Activated CD8-positive, alpha-beta memory T cell treated with anti-CD3 and anti-CD28 coated beads, Interleukin-2, amount 10 ng/mL, durations not matched to agents 7 days and 5 days (primary cell): ENCODE measurements at regions of chr21 and their contacts with region 1.

Region 1: GRCh38 chr21:36630485-36631206 is 68.3 kb upstream of the SIM2 start:
- DNase-seq: peak; percentile 62
- ATAC-seq: peak; percentile 49
- H3K4me3 Mint-ChIP-seq: no peak overlapping the region
- H3K27ac Mint-ChIP-seq: no peak overlapping the region
- H3K4me1 Mint-ChIP-seq: no peaks in the 10 kb centered on the region
- H3K27me3 Mint-ChIP-seq: peaks cover 6% of the 10 kb centered on the region

Region 2: GRCh38 chr21:36429947-36430546 is 200.6 kb before region 1 on chr21:
- CTCF ChIA-PET with region 1: no interaction called
- DNase-seq: peak; percentile 91
- ATAC-seq: peak; percentile 96
- H3K4me3 Mint-ChIP-seq: peak overlapping the region; percentile 64
- H3K27ac Mint-ChIP-seq: peak overlapping the region; percentile 81
- H3K4me1 Mint-ChIP-seq: peaks cover 25% of the 10 kb centered on the region
- H3K27me3 Mint-ChIP-seq: peaks cover 8% of the 10 kb centered on the region

Region 3: DNA sequence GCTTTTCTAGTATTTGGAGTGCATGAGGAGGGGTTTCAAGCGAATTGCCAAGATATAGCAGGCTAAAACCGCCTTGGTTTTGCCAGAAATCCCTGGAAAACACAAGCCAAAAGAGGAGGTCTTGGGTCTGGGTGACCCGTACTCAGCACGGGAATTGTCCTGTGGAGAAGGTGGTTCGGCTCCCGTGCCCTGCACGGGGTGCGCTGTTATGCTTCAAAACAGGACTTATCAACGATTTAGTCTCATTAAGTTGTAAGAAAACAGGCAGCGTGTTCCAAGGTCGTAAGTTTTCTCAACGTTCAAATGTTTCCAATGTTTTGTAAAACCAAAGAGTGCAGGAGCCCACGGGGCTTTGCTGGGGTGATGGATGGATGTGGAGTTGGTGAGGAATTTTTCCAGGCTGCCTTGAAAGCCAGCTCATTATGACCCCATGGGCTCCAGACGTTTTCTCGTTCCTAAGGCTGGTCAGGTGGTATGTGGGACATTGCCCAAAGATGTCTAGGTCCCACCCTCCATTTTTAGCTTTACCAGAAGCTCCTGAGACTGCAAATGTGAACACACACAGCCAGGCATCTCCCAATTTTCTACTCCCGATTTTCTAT is 75.3 kb before region 1 on chr21:
- CTCF ChIA-PET with region 1: no interaction called
- DNase-seq: peak; percentile 16
- ATAC-seq: no peak
- H3K4me3 Mint-ChIP-seq: no peak overlapping the region
- H3K27ac Mint-ChIP-seq: no peak overlapping the region
- H3K4me1 Mint-ChIP-seq: no peaks in the 10 kb centered on the region
- H3K27me3 Mint-ChIP-seq: peaks cover 18% of the 10 kb centered on the region

Region 4: DNA sequence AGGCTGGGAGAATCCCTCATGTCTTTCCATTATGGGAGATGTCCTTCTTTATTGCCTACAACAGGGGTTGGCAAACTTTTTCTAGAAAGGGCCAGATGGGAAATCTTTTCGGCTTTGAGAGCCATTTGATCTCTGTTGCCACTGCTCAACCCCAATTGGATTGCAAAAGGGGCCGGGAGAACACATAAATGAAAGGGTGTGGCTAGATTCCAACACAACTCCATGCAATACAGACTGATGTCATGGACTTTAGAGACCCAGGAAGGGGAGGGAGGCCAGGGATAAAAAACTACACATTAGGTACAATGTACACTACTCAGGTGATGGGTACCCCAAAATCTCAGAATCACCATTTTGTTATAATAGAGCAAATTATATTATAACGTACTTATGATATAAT is 29.3 kb before region 1 on chr21:
- CTCF ChIA-PET with region 1: interaction called, 11 read pairs
- DNase-seq: no peak
- ATAC-seq: no peak
- H3K4me3 Mint-ChIP-seq: no peak overlapping the region
- H3K27ac Mint-ChIP-seq: no peak overlapping the region
- H3K4me1 Mint-ChIP-seq: no peaks in the 10 kb centered on the region
- H3K27me3 Mint-ChIP-seq: peaks cover 20% of the 10 kb centered on the region

Region 5: DNA sequence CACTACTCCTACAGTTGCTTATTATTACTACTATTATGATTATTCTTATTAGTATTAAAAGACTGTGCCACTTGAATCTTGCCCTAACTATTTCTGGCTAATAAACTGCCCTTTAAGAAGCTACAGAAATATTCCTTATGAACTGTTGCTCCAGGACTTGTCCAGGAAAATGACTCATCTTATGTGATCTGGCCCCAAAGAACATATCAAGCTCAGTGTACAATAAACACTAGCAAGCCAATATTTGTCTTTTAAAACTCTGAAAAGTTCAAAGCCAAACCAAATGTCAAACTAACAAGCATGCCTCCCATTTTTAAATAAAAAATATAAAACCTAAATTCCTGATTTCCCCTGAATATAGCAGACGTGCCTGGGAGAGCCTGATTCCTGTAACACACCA is 20.4 kb before region 1 on chr21:
- CTCF ChIA-PET with region 1: interaction called, 11 read pairs
- DNase-seq: no peak
- ATAC-seq: no peak
- H3K4me3 Mint-ChIP-seq: no peak overlapping the region
- H3K27ac Mint-ChIP-seq: no peak overlapping the region
- H3K4me1 Mint-ChIP-seq: no peaks in the 10 kb centered on the region
- H3K27me3 Mint-ChIP-seq: peaks cover 10% of the 10 kb centered on the region

Region 6: GRCh38 chr21:36698981-36699891 is 68.6 kb after region 1 on chr21 and contains the start of gene SIM2:
- CTCF ChIA-PET with region 1: no interaction called
- DNase-seq: no peak
- ATAC-seq: no peak
- H3K4me3 Mint-ChIP-seq: peak within 1 kb of the TSS; percentile 35
- H3K27ac Mint-ChIP-seq: peak within 1 kb of the TSS; percentile 67
- H3K4me1 Mint-ChIP-seq: peaks cover 7% of the 10 kb centered on the region
- H3K27me3 Mint-ChIP-seq: peaks cover 85% of the 10 kb centered on the region
- total RNA-seq, gene SIM2: 0.09 TPM in 1 of 2 experiments, not detected in the other

Region 7: DNA sequence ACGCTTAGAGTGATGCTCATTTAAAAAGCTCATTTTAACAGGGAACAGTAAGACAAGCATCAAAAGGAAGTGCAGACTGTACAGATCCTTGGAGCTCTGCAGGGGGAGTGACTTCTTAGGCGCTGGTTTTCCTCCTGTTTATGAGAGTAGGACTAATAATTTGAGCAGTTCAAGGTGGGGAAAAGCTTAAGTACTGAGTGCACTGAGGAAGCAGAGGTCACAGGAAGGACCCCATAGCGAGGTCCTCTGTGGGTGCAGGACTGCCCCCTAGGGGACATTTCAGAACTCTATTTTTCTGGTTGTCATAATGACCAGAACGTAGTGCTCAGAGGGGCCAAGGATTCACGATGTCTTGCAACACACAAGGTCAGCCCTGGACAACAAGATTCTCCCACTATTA is 223.7 kb after region 1 on chr21:
- CTCF ChIA-PET with region 1: interaction called, 11 read pairs
- DNase-seq: peak; percentile 53
- ATAC-seq: peak; percentile 66
- H3K4me3 Mint-ChIP-seq: no peak overlapping the region
- H3K27ac Mint-ChIP-seq: no peak overlapping the region
- H3K4me1 Mint-ChIP-seq: peaks cover 17% of the 10 kb centered on the region
- H3K27me3 Mint-ChIP-seq: no peaks in the 10 kb centered on the region

Region 8: DNA sequence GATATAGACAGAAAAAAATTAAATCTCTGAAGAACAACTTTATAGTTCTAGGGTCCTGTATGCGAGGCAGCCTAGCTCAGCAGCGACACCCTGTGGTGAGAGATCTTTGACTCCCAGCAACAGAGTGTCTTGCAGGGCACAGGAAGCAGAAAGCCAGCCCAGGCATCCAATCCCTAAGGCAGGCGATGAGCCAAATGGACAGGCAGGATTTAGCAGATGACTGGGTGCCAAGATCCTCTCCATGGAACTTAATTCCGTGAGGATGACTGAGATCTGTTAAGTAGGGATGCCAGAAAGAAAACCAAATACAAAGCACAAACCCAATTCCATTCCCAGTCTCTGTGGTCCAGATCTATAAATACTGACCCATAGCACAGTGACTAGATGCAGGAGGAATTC is 297.1 kb after region 1 on chr21:
- CTCF ChIA-PET with region 1: interaction called, 36 read pairs
- DNase-seq: peak; percentile 79
- ATAC-seq: peak; percentile 65
- H3K4me3 Mint-ChIP-seq: no peak overlapping the region
- H3K27ac Mint-ChIP-seq: no peak overlapping the region
- H3K4me1 Mint-ChIP-seq: no peaks in the 10 kb centered on the region
- H3K27me3 Mint-ChIP-seq: no peaks in the 10 kb centered on the region